Transverse colon (tissue), 4 donors: ENCODE measurements at regions of chr17 and their contacts with region 1.

Region 1: DNA sequence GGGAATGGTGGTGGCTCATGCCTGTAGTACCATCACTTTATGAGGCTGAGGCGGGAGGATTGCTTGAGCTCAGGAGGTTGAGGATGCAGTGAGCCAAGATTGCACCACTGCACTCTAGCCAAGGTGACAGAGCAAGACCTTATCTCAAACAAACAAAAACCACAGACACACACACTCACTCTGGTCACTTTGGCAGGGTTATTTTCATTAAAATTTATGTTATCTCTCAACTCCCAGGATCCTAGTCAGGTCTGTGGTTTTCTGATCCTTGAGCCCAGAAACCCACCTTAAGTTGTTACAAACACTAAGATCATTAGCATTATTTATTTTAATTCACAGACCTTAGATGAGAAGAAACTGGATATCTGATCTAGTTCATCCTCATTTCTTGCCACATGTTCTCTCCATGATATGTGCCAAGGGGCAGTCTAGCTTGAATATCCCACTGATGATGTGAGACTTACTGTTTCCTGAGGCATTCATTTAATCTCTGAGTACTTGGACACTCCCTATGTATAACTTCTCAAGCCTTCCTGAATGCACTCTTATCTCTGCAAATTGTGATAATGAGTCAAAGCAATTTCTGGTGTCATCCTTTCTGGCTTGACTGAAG is 9.6 kb downstream of the ABHD15 start:
- DNase-seq: no peak
- H3K4me3 ChIP-seq: no peak overlapping the region
- H3K27ac ChIP-seq: no peak overlapping the region
- H3K4me1 ChIP-seq: peaks cover 0 to 15% (median 2%) of the 10 kb centered on the region in 4 donors
- H3K27me3 ChIP-seq: no peaks in the 10 kb centered on the region
- CTCF ChIP-seq: no peak
- EP300 ChIP-seq: no peak
- POLR2A ChIP-seq: no peak

Region 2: DNA sequence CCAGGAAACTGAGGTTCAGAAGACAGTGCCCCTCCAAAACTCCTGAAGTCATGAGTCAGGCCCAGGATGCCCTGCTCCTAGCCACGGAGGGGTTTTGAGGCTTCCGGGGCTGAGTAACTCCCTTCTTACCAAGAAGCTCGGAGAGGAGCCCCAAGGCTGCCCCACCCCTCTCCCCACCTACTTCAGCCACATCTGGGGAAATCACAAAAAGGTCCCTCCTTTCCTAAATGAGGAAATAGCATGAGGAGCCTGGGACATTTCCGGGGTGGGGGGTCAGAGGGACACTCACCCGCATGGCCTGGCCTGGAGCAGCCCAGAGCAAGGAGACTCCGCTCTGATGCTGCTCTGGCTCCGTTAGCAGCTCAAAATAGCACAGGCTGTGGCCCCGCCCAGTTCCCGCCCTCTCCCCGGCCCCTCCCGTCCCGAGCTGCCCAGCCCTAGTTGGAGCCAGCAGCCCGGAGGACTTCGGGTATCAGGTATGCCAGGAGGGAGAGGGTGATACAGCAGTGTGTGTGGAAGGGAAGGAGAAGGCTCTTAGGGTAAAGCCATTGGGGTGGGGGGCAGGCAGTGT is 417.1 kb before region 1 on chr17:
- in situ Hi-C with region 1: no loop called
- intact Hi-C with region 1: loop called (anchors 5 kb)
- DNase-seq: peak; percentile 86
- H3K4me3 ChIP-seq: peak overlapping the region; percentile 17 to 42 (median 19)
- H3K27ac ChIP-seq: peak overlapping the region; percentile 78 to 89 (median 81)
- H3K4me1 ChIP-seq: peaks cover 14 to 44% (median 26%) of the 10 kb centered on the region in 4 donors
- H3K27me3 ChIP-seq: no peaks in the 10 kb centered on the region
- CTCF ChIP-seq: no peak
- EP300 ChIP-seq: no peak
- POLR2A ChIP-seq: no peak